ENCODE measurements at regions of chr5 and their contacts with region 1.

Region 1: GRCh38 chr5:132386644-132387286 is 17.3 kb downstream of the SLC22A5 start:
- DNase-seq: peak; percentile 65 to 90 (median 78)
- H3K4me3 ChIP-seq: no peak overlapping the region
- H3K27ac ChIP-seq: peak overlapping the region in 3 of 5 donors; percentile 84 to 93 (median 89)
- H3K4me1 ChIP-seq: peaks cover 23 to 46% of the 10 kb centered on the region in 2 donors
- H3K27me3 ChIP-seq: no peaks in the 10 kb centered on the region
- CTCF ChIP-seq: peak; percentile 39 to 92 (median 80)
- POLR2A ChIP-seq: no peak

Region 2: GRCh38 chr5:132546108-132546507 is 159.3 kb after region 1 on chr5:
- intact Hi-C with region 1: no loop called
- DNase-seq: no peak
- H3K4me3 ChIP-seq: no peak overlapping the region
- H3K27ac ChIP-seq: no peak overlapping the region
- H3K4me1 ChIP-seq: no peaks in the 10 kb centered on the region
- H3K27me3 ChIP-seq: no peaks in the 10 kb centered on the region
- CTCF ChIP-seq: no peak
- POLR2A ChIP-seq: no peak

Region 3: DNA sequence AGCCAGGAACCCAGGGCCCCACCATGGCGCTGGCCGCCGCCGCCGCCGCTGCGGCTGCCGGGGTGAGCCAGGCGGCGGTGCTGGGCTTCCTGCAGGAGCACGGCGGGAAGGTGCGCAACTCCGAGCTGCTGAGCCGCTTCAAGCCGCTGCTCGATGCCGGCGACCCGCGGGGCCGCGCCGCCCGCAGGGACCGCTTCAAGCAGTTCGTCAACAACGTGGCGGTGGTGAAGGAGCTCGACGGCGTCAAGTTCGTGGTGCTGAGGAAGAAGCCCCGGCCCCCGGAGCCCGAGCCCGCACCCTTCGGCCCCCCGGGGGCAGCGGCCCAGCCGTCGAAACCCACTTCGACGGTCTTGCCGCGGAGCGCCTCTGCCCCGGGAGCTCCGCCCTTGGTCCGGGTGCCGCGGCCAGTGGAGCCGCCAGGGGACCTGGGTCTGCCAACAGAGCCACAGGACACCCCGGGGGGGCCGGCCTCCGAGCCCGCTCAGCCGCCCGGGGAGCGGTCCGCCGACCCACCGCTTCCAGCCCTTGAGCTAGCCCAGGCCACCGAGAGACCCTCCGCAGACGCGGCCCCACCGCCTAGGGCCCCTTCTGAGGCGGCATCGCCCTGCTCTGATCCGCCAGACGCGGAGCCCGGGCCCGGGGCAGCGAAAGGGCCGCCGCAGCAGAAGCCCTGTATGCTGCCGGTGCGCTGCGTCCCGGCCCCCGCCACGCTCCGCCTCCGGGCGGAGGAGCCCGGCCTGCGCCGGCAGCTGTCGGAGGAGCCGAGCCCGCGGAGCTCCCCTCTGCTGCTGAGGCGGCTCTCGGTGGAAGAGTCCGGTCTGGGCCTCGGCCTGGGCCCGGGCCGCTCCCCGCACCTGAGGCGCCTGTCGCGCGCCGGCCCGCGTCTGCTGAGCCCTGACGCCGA is 427.1 kb after region 1 on chr5:
- intact Hi-C with region 1: loop called in 1 of 2 experiments (anchors 10 kb)
- DNase-seq: peak in 2 of 7 donors; percentile 27 to 55
- H3K4me3 ChIP-seq: peak overlapping the region in 2 of 4 donors; percentile 18 to 46
- H3K27ac ChIP-seq: peak overlapping the region in 1 of 5 donors; percentile 56
- H3K4me1 ChIP-seq: peaks cover 3 to 9% of the 10 kb centered on the region in 2 donors
- H3K27me3 ChIP-seq: peaks cover 15% of the 10 kb centered on the region
- CTCF ChIP-seq: peak in 1 of 6 experiments; percentile 21
- POLR2A ChIP-seq: no peak